CD14-positive monocyte (primary cell): ENCODE measurements at regions of chr9 and their contacts with region 1.

Region 1: DNA sequence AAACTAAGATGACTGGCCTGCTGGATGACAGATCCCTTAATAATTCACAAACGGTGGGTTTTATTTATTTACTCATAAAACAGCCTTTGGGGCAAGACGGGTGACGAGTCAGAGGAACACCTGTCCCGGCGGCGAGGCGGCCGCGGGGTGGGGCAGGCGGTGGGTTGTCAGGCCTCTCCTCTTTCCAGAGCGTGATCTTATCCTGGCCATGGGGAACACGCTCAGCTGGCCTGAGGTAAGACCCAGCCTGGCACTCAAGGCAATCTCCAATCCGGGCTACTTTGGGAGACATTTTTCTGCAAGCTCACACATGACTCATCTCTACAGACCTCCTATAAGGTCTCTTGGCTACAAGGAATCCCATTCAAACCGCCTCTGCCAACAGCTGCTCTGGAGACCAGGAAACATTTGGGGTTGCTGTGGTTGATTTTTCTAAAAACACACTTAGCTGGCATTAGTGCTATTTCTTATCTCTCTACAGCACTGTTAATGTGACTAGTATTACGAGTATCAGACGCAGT is 6.3 kb downstream of the RAPGEF1 start:
- DNase-seq: peak; percentile 71 to 86 (median 79)
- H3K4me3 ChIP-seq: peak overlapping the region in 1 of 3 experiments; percentile 61
- H3K4me3 Mint-ChIP-seq: peak overlapping the region; percentile 67 to 68
- H3K27ac ChIP-seq: peak overlapping the region; percentile 89 to 94
- H3K27ac Mint-ChIP-seq: peak overlapping the region; percentile 81 to 95 (median 90)
- H3K4me1 ChIP-seq: peaks cover 97 to 98% of the 10 kb centered on the region in 2 donors
- H3K4me1 Mint-ChIP-seq: peaks cover 91% of the 10 kb centered on the region
- H3K27me3 ChIP-seq: no peaks in the 10 kb centered on the region
- H3K27me3 Mint-ChIP-seq: peaks cover 0 to 7% (median 0%) of the 10 kb centered on the region in 3 donors
- CTCF ChIP-seq: no peak

Region 2: DNA sequence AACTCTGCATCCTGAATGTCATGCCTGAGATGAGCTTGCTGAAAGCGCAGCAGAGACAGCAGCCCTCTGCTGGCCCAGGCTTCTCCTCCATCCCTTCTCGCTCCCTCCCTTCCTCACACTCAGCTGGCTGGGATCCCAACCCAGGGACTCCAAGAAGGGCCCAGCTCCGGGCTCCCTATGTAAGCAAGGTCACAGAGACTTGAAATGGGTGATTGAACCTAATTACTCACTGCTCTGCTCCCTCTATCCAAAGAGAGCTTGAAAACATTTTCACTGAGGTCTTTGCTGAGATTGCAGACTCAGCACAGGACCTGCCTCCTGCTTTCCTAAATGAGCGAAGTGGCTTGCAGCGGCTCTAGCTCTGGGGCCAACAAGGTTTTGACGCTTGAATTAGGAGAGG is 36.5 kb before region 1 on chr9:
- intact Hi-C with region 1: loop called (anchors 2 to 5 kb)
- DNase-seq: no peak
- H3K4me3 ChIP-seq: peak overlapping the region in 1 of 3 experiments; percentile 7
- H3K4me3 Mint-ChIP-seq: peak overlapping the region in 1 of 2 donors; percentile 27
- H3K27ac ChIP-seq: peak overlapping the region; percentile 97 to 98
- H3K27ac Mint-ChIP-seq: peak overlapping the region; percentile 14 to 99 (median 96)
- H3K4me1 ChIP-seq: peaks cover 54 to 55% of the 10 kb centered on the region in 2 donors
- H3K4me1 Mint-ChIP-seq: peaks cover 72% of the 10 kb centered on the region
- H3K27me3 ChIP-seq: no peaks in the 10 kb centered on the region
- H3K27me3 Mint-ChIP-seq: no peaks in the 10 kb centered on the region
- CTCF ChIP-seq: no peak

Region 3: DNA sequence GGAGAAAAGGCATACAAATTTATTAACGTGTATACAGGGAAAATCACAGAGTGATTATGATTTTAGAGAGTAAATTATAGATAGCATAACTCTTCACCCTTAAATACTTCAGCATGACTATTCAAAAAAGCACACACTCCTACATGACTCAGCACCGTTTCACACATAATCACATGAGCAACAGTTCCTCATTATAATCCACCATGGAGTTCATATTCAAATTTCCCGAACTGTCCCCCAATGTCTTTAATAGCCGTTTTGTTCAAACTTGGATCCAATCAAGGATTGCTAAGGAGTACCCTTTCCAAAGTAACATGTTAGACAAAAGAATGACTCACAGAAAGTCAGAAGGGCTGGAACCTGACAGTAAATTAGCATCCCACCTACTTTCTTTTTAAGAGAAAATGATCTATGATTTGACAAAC is 25.9 kb before region 1 on chr9:
- intact Hi-C with region 1: loop called (anchors 2 to 5 kb)
- DNase-seq: peak; percentile 79 to 89 (median 86)
- H3K4me3 ChIP-seq: peak overlapping the region in 1 of 3 experiments; percentile 24
- H3K4me3 Mint-ChIP-seq: peak overlapping the region; percentile 70 to 79
- H3K27ac ChIP-seq: peak overlapping the region; percentile 79 to 90
- H3K27ac Mint-ChIP-seq: peak overlapping the region; percentile 96 to 99 (median 98)
- H3K4me1 ChIP-seq: peaks cover 77 to 87% of the 10 kb centered on the region in 2 donors
- H3K4me1 Mint-ChIP-seq: peaks cover 86% of the 10 kb centered on the region
- H3K27me3 ChIP-seq: no peaks in the 10 kb centered on the region
- H3K27me3 Mint-ChIP-seq: peaks cover 0 to 1% (median 0%) of the 10 kb centered on the region in 3 donors
- CTCF ChIP-seq: no peak